Activated CD4-positive, alpha-beta T cell treated with anti-CD3 and anti-CD28 coated beads, Interleukin-2, amount 10 ng/mL, durations not matched to agents 24 days and 14 days (primary cell): ENCODE measurements at regions of chr14 and their contacts with region 1.

Region 1: GRCh38 chr14:65336191-65336591 is 76.3 kb upstream of the FUT8 start:
- DNase-seq: peak; percentile 88
- H3K4me3 Mint-ChIP-seq: peak overlapping the region; percentile 90
- H3K27ac Mint-ChIP-seq: peak overlapping the region; percentile 98
- H3K4me1 Mint-ChIP-seq: peaks cover 55% of the 10 kb centered on the region
- H3K27me3 Mint-ChIP-seq: no peaks in the 10 kb centered on the region

Region 2: GRCh38 chr14:65302571-65303189 is 33.5 kb before region 1 on chr14:
- intact Hi-C with region 1: loop called (anchors 1 kb)
- DNase-seq: peak; percentile 82
- H3K4me3 Mint-ChIP-seq: peak overlapping the region; percentile 62
- H3K27ac Mint-ChIP-seq: peak overlapping the region; percentile 97
- H3K4me1 Mint-ChIP-seq: peaks cover 67% of the 10 kb centered on the region
- H3K27me3 Mint-ChIP-seq: no peaks in the 10 kb centered on the region

Region 3: DNA sequence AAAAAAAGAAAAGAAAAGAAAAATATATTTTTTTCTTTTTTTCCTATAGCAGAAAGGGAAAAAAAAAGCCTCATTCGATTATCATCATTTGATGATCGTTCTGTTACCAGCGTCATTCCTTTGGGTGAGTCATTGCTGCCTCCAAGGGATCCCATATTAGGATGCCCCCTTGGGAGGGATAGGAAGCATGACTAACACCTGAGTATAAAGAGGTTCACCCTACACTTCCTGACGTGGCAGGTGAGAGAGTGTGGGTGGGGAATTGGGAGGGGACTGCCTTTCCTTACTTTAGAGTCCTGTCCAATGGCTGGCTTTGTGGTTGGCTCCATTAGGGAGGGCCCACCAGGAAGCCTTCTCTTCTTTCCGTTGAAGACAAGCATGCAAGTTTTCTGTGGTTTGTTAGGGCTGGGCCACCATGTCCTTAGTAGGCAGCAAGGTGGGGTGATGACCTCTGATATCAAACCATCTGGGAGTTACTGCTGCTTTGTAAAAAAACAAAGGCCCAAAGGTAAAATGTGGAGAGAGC is 20.2 kb after region 1 on chr14:
- intact Hi-C with region 1: loop called (anchors 2 kb)
- DNase-seq: peak; percentile 77
- H3K4me3 Mint-ChIP-seq: peak overlapping the region; percentile 34
- H3K27ac Mint-ChIP-seq: peak overlapping the region; percentile 78
- H3K4me1 Mint-ChIP-seq: peaks cover 61% of the 10 kb centered on the region
- H3K27me3 Mint-ChIP-seq: no peaks in the 10 kb centered on the region

Region 4: GRCh38 chr14:65396082-65396910 is 60.1 kb after region 1 on chr14:
- intact Hi-C with region 1: loop called (anchors 2 kb)
- DNase-seq: no peak
- H3K4me3 Mint-ChIP-seq: peak overlapping the region; percentile 1
- H3K27ac Mint-ChIP-seq: peak overlapping the region; percentile 63
- H3K4me1 Mint-ChIP-seq: peaks cover 15% of the 10 kb centered on the region
- H3K27me3 Mint-ChIP-seq: no peaks in the 10 kb centered on the region